Heart right ventricle (tissue), 16 donors: ENCODE measurements at regions of chr15 and their contacts with region 1.

Region 1: GRCh38 chr15:71743861-71744382 is 66.4 kb upstream of the NR2E3 start:
- DNase-seq: peak in 1 of 2 donors; percentile 63
- ATAC-seq: peak in 2 of 8 donors; percentile 31 to 52
- H3K4me3 ChIP-seq: no peak overlapping the region
- H3K27ac ChIP-seq: no peak overlapping the region
- H3K4me1 ChIP-seq: peaks cover 0 to 6% (median 0%) of the 10 kb centered on the region in 9 donors
- H3K27me3 ChIP-seq: no peaks in the 10 kb centered on the region
- CTCF ChIP-seq: peak; percentile 67 to 88 (median 81)

Region 2: GRCh38 chr15:71780115-71780976 is 36.4 kb after region 1 on chr15:
- intact Hi-C with region 1: loop called in 1 of 10 experiments (anchors 5 kb)
- DNase-seq: no peak
- ATAC-seq: peak in 3 of 8 donors; percentile 27 to 41 (median 35)
- H3K4me3 ChIP-seq: peak overlapping the region in 1 of 10 donors; percentile 18
- H3K27ac ChIP-seq: peak overlapping the region in 3 of 10 donors; percentile 3 to 42 (median 6)
- H3K4me1 ChIP-seq: peaks cover 0 to 18% (median 8%) of the 10 kb centered on the region in 9 donors
- H3K27me3 ChIP-seq: no peaks in the 10 kb centered on the region
- CTCF ChIP-seq: peak; percentile 45 to 75 (median 69)

Region 3: GRCh38 chr15:71800835-71801745 is 57.2 kb after region 1 on chr15:
- intact Hi-C with region 1: loop called in 9 of 10 experiments (anchors 1 to 10 kb)
- DNase-seq: peak in 1 of 2 donors; percentile 40
- ATAC-seq: peak; percentile 65 to 90 (median 80)
- H3K4me3 ChIP-seq: no peak overlapping the region
- H3K27ac ChIP-seq: no peak overlapping the region
- H3K4me1 ChIP-seq: peaks cover 0 to 11% (median 5%) of the 10 kb centered on the region in 9 donors
- H3K27me3 ChIP-seq: peaks cover 0 to 4% (median 0%) of the 10 kb centered on the region in 7 donors
- CTCF ChIP-seq: peak; percentile 74 to 92 (median 85)